Heart left ventricle (tissue), 16 donors: ENCODE measurements at regions of chr6 and their contacts with region 1.

Region 1: DNA sequence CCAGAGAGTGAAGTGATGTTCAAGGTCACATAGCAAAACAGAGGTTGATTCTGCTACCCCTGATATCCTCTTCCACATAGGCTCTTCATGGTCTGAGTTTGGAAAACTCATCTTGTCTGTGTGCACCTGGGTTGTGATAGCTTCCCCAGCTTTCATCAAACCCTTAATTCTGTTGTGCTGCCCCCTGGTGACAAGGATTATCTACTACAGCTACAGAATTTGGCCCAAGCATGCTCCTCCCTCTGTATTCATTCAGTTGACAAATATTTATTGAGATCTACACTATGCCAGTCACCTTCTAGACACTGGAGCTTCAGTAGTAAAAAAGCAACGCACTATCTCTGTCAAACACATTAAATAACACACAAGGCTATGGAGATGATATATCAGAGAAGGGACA is 50.4 kb downstream of the SMPDL3A start:
- DNase-seq: peak in 2 of 5 donors; percentile 29 to 38
- ATAC-seq: peak in 2 of 4 donors; percentile 60 to 65
- H3K4me3 ChIP-seq: no peak overlapping the region
- H3K27ac ChIP-seq: no peak overlapping the region
- H3K4me1 ChIP-seq: no peaks in the 10 kb centered on the region
- H3K27me3 ChIP-seq: peaks cover 0 to 27% (median 0%) of the 10 kb centered on the region in 9 donors
- CTCF ChIP-seq: peak; percentile 47 to 72 (median 61)
- POLR2A ChIP-seq: no peak

Region 2: GRCh38 chr6:122730775-122731386 is 108.6 kb before region 1 on chr6:
- intact Hi-C with region 1: loop called (anchors 1 to 5 kb)
- DNase-seq: no peak
- ATAC-seq: no peak
- H3K4me3 ChIP-seq: no peak overlapping the region
- H3K27ac ChIP-seq: no peak overlapping the region
- H3K4me1 ChIP-seq: no peaks in the 10 kb centered on the region
- H3K27me3 ChIP-seq: peaks cover 0 to 18% (median 0%) of the 10 kb centered on the region in 9 donors
- CTCF ChIP-seq: peak; percentile 58 to 89 (median 75)
- POLR2A ChIP-seq: no peak

Region 3: GRCh38 chr6:122749451-122750050 is 89.9 kb before region 1 on chr6:
- intact Hi-C with region 1: loop called in 5 of 10 experiments (anchors 5 kb)
- DNase-seq: no peak
- ATAC-seq: no peak
- H3K4me3 ChIP-seq: no peak overlapping the region
- H3K27ac ChIP-seq: no peak overlapping the region
- H3K4me1 ChIP-seq: peaks cover 0 to 21% (median 0%) of the 10 kb centered on the region in 12 donors
- H3K27me3 ChIP-seq: no peaks in the 10 kb centered on the region
- CTCF ChIP-seq: no peak
- POLR2A ChIP-seq: no peak

Region 4: DNA sequence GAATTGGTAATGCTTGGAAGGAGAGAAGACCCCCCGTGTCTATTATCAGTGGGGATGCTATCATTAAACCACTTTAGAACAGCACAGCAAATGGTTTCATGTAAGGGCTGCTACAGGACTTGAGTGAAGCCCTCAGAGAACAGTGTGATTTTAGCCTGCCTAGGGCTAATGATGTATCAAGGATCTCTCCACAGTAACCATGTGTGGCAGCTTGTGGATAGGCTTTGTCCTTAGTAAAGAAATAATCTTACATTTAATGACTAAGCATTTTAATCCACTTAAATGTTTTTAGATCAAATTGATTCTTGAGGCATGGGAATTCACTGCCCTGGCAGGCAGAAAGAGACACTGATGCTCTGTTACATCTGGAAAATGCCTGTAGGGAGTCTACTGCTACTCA is 1459.3 kb after region 1 on chr6:
- intact Hi-C with region 1: no loop called
- DNase-seq: no peak
- ATAC-seq: no peak
- H3K4me3 ChIP-seq: no peak overlapping the region
- H3K27ac ChIP-seq: no peak overlapping the region
- H3K4me1 ChIP-seq: no peaks in the 10 kb centered on the region
- H3K27me3 ChIP-seq: no peaks in the 10 kb centered on the region
- CTCF ChIP-seq: no peak
- POLR2A ChIP-seq: no peak